ENCODE measurements at regions of chr6 and their contacts with region 1.

Region 1: DNA sequence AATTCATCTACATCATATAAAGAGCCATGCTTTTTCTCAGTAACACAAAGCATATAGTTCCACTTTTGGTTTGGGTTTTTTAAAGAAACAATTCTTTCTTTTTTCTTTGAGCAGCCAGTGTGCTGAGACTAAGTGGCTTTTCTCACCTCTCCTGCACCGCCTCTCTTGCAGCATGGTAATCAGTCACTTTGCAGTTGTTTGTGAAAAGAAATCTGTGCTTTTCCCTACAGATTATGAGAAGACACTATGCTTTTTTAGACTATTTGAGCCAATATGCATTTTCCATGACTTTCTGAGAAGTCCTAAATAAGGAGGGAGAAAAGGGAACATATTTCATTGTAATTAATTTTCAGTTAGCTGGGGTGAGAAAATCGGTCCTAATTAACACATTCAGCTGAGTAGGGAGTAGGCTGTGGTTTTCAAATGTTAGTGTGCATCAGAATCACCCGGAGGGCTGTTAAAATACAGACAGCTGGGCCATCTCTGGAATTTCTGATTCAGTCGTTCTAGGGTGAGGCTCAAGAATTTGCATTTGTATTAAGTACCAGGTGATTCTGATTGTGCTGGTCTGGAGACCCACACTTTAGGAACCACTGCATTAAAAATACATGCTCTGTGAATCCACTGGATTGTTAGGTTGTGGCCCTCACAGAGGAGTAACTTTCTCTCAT is 155.2 kb downstream of the TINAG start:
- DNase-seq: no peak
- H3K4me3 ChIP-seq: no peak overlapping the region
- H3K27ac ChIP-seq: no peak overlapping the region
- H3K4me1 ChIP-seq: no peaks in the 10 kb centered on the region
- H3K27me3 ChIP-seq: no peaks in the 10 kb centered on the region
- CTCF ChIP-seq: no peak
- EP300 ChIP-seq: no peak
- POLR2A ChIP-seq: no peak

Region 2: GRCh38 chr6:54390362-54390761 is 73.1 kb before region 1 on chr6:
- in situ Hi-C with region 1: no loop called
- intact Hi-C with region 1: loop called (anchors 10 kb)
- DNase-seq: no peak
- H3K4me3 ChIP-seq: no peak overlapping the region
- H3K27ac ChIP-seq: no peak overlapping the region
- H3K4me1 ChIP-seq: no peaks in the 10 kb centered on the region
- H3K27me3 ChIP-seq: no peaks in the 10 kb centered on the region
- CTCF ChIP-seq: no peak
- EP300 ChIP-seq: no peak
- POLR2A ChIP-seq: no peak

Region 3: GRCh38 chr6:54601600-54602300 is 138.3 kb after region 1 on chr6:
- in situ Hi-C with region 1: no loop called
- intact Hi-C with region 1: no loop called
- DNase-seq: no peak
- H3K4me3 ChIP-seq: no peak overlapping the region
- H3K27ac ChIP-seq: no peak overlapping the region
- H3K4me1 ChIP-seq: no peaks in the 10 kb centered on the region
- H3K27me3 ChIP-seq: no peaks in the 10 kb centered on the region
- CTCF ChIP-seq: no peak
- EP300 ChIP-seq: no peak
- POLR2A ChIP-seq: no peak

Region 4: GRCh38 chr6:55388211-55388610 is 924.7 kb after region 1 on chr6:
- in situ Hi-C with region 1: no loop called
- intact Hi-C with region 1: no loop called
- DNase-seq: no peak
- H3K4me3 ChIP-seq: no peak overlapping the region
- H3K27ac ChIP-seq: no peak overlapping the region
- H3K4me1 ChIP-seq: no peaks in the 10 kb centered on the region
- H3K27me3 ChIP-seq: no peaks in the 10 kb centered on the region
- CTCF ChIP-seq: no peak
- EP300 ChIP-seq: no peak
- POLR2A ChIP-seq: no peak